ENCODE measurements at regions of chr18 and their contacts with region 1.

Region 1: GRCh38 chr18:59070181-59070912 is 69.3 kb upstream of the SEC11C start:
- DNase-seq: peak; percentile 78
- H3K4me3 ChIP-seq: no peak overlapping the region
- H3K27ac ChIP-seq: no peak overlapping the region
- H3K4me1 ChIP-seq: no peaks in the 10 kb centered on the region
- H3K27me3 ChIP-seq: peaks cover 2 to 3% of the 10 kb centered on the region in 2 experiments
- CTCF ChIP-seq: peak; percentile 90
- POLR2A ChIP-seq: no peak

Region 2: DNA sequence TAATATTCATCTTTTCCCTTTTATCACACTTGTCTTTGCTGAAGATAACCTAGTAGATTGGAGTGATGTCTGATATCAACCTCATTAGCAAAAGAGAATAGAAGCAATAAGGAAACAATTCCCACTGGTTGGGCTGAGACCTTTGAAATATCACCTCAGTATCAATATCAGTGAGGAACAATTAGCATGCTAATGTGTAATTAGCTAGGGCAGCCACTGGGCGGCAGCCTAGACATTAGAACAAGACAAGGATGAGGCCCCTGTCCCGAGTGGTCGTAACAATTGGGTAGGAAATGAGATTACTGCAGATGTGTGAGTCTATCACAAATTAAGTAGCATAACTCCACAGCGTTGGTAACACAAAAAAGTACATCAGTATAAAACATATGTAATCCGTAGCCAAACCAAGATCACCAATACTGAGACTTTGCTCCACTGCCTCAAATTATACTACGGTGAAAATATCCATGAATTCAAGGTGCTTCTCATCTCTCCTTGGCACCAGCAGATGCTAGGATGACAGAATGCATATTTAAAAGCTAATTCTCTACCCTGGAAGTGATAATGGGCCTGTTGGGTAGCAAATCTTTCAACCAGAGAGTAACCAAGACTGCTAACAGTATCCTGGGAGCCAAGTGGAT is 540.5 kb before region 1 on chr18:
- CTCF ChIA-PET with region 1: interaction called, 12 read pairs
- POLR2A ChIA-PET with region 1: no interaction called
- dilution Hi-C with region 1: no loop called
- intact Hi-C with region 1: loop called (anchors 2 kb)
- DNase-seq: peak; percentile 49
- H3K4me3 ChIP-seq: no peak overlapping the region
- H3K27ac ChIP-seq: no peak overlapping the region
- H3K4me1 ChIP-seq: no peaks in the 10 kb centered on the region
- H3K27me3 ChIP-seq: peaks cover 6 to 21% of the 10 kb centered on the region in 2 experiments
- CTCF ChIP-seq: peak; percentile 65 to 74
- POLR2A ChIP-seq: no peak

Region 3: GRCh38 chr18:59041819-59042815 is 28.2 kb before region 1 on chr18:
- CTCF ChIA-PET with region 1: interaction called, 13 read pairs
- POLR2A ChIA-PET with region 1: no interaction called
- dilution Hi-C with region 1: no loop called
- intact Hi-C with region 1: no loop called
- DNase-seq: peak; percentile 41
- H3K4me3 ChIP-seq: no peak overlapping the region
- H3K27ac ChIP-seq: no peak overlapping the region
- H3K4me1 ChIP-seq: no peaks in the 10 kb centered on the region
- H3K27me3 ChIP-seq: no peaks in the 10 kb centered on the region
- CTCF ChIP-seq: no peak
- POLR2A ChIP-seq: no peak

Region 4: GRCh38 chr18:59056706-59057492 is 13.4 kb before region 1 on chr18:
- CTCF ChIA-PET with region 1: interaction called, 32 read pairs
- POLR2A ChIA-PET with region 1: no interaction called
- dilution Hi-C with region 1: no loop called
- intact Hi-C with region 1: no loop called
- DNase-seq: peak; percentile 76
- H3K4me3 ChIP-seq: no peak overlapping the region
- H3K27ac ChIP-seq: no peak overlapping the region
- H3K4me1 ChIP-seq: no peaks in the 10 kb centered on the region
- H3K27me3 ChIP-seq: peaks cover 0 to 3% of the 10 kb centered on the region in 2 experiments
- CTCF ChIP-seq: peak; percentile 77 to 87
- POLR2A ChIP-seq: no peak

Region 5: GRCh38 chr18:59085797-59086196 is 15.4 kb after region 1 on chr18:
- CTCF ChIA-PET with region 1: interaction called, 86 read pairs
- POLR2A ChIA-PET with region 1: no interaction called
- dilution Hi-C with region 1: no loop called
- intact Hi-C with region 1: no loop called
- DNase-seq: peak; percentile 41
- H3K4me3 ChIP-seq: no peak overlapping the region
- H3K27ac ChIP-seq: no peak overlapping the region
- H3K4me1 ChIP-seq: peaks cover 15% of the 10 kb centered on the region
- H3K27me3 ChIP-seq: peaks cover 0 to 2% of the 10 kb centered on the region in 2 experiments
- CTCF ChIP-seq: no peak
- POLR2A ChIP-seq: no peak

Measured in endothelial cell of umbilical vein (primary cell).